Gastrocnemius medialis (tissue), 4 donors: ENCODE measurements at regions of chr5 and their contacts with region 1.

Region 1: DNA sequence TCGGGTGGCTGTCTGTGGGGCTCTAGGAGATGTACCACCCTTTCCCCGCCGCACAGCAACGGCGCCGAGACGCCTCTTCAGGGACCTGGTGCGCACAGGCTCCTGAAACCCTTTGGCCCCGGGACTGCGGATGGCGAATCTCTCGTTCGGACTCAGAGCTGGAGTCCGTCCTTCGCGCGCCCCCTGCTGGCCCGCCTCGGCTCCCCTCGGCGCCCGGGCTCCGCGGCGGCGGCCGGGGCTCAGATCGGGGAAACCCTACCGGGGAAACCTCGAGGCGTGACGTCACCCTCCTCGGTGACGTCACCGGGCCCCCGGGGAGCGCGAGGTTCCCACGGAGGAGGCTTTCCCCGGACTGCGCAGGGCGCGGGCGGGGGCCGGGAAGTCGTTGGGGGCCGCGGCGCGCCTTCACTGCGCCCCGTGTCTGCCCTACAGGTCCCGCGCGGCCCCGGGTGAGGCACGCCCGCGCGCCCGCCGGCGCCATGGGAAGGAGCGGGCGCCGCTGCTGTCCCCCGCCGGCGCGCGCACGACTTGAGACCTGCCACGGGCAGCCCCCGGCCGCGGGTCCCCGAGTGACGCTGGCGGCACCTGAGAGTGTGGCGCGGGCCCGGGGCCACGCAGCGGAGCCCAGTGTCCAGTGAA is 7.9 kb downstream of the PRR7 start:
- DNase-seq: peak; percentile 68 to 86
- ATAC-seq: peak; percentile 67 to 68
- H3K4me3 ChIP-seq: peak overlapping the region; percentile 55 to 93 (median 73)
- H3K27ac ChIP-seq: peak overlapping the region; percentile 67 to 77 (median 70)
- H3K4me1 ChIP-seq: peaks cover 9 to 25% of the 10 kb centered on the region in 2 donors
- H3K27me3 ChIP-seq: peaks cover 2 to 12% (median 9%) of the 10 kb centered on the region in 3 donors
- CTCF ChIP-seq: peak; percentile 87 to 98 (median 97)
- POLR2A ChIP-seq: peak; percentile 5 to 16

Region 2: DNA sequence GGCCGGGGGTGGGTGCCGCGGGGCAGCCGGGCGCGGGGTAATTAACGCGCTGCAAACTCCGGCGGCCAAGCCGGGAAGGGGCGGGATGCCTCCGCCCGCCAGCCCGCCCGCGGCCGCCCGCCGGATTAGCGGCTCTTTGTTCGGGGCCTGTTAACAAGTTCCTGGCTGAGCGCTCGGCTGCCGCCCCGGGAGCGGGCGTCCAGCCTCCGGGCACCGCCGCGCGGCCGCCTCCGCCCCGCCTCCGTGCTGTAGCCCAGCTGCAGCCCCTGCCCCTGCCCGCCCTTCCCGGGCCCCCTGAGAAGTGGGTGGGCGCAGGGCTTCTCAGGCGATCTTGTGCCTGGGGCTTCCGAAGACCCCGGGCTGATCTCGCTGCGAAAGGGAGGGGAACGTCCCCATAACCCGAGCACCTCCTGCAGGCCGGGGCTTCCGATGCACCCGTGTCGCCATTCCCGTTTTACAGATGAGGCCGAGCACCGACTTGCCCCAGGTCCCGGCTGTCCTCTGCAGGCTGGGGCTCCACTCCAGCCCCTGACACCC is 636.6 kb before region 1 on chr5:
- in situ Hi-C with region 1: no loop called
- intact Hi-C with region 1: no loop called
- DNase-seq: no peak
- ATAC-seq: no peak
- H3K4me3 ChIP-seq: peak overlapping the region in 3 of 4 donors; percentile 25 to 39 (median 36)
- H3K27ac ChIP-seq: no peak overlapping the region
- H3K4me1 ChIP-seq: no peaks in the 10 kb centered on the region
- H3K27me3 ChIP-seq: peaks cover 44 to 67% (median 46%) of the 10 kb centered on the region in 3 donors
- CTCF ChIP-seq: no peak
- POLR2A ChIP-seq: no peak

Region 3: GRCh38 chr5:177311723-177312648 is 142.5 kb before region 1 on chr5 and contains the start of gene MXD3:
- in situ Hi-C with region 1: no loop called
- intact Hi-C with region 1: loop called (anchors 5 kb)
- DNase-seq: peak; percentile 96 to 97
- ATAC-seq: peak; percentile 85 to 90
- H3K4me3 ChIP-seq: peak within 1 kb of the TSS; percentile 60 to 96 (median 78)
- H3K27ac ChIP-seq: peak within 1 kb of the TSS; percentile 58 to 83 (median 78)
- H3K4me1 ChIP-seq: peaks cover 27 to 28% of the 10 kb centered on the region in 2 donors
- H3K27me3 ChIP-seq: no peaks in the 10 kb centered on the region
- CTCF ChIP-seq: no peak
- POLR2A ChIP-seq: no peak
- total RNA-seq, gene MXD3: 0.90 to 7.8 (median 3.5) TPM

Region 4: GRCh38 chr5:177390363-177391300 is 63.9 kb before region 1 on chr5:
- in situ Hi-C with region 1: loop called in 1 of 4 experiments (anchors 10 kb)
- intact Hi-C with region 1: loop called (anchors 1 kb)
- DNase-seq: peak; percentile 51 to 73
- ATAC-seq: peak; percentile 84 to 95
- H3K4me3 ChIP-seq: no peak overlapping the region
- H3K27ac ChIP-seq: no peak overlapping the region
- H3K4me1 ChIP-seq: no peaks in the 10 kb centered on the region
- H3K27me3 ChIP-seq: no peaks in the 10 kb centered on the region
- CTCF ChIP-seq: peak; percentile 91 to 99 (median 95)
- POLR2A ChIP-seq: no peak

Region 5: DNA sequence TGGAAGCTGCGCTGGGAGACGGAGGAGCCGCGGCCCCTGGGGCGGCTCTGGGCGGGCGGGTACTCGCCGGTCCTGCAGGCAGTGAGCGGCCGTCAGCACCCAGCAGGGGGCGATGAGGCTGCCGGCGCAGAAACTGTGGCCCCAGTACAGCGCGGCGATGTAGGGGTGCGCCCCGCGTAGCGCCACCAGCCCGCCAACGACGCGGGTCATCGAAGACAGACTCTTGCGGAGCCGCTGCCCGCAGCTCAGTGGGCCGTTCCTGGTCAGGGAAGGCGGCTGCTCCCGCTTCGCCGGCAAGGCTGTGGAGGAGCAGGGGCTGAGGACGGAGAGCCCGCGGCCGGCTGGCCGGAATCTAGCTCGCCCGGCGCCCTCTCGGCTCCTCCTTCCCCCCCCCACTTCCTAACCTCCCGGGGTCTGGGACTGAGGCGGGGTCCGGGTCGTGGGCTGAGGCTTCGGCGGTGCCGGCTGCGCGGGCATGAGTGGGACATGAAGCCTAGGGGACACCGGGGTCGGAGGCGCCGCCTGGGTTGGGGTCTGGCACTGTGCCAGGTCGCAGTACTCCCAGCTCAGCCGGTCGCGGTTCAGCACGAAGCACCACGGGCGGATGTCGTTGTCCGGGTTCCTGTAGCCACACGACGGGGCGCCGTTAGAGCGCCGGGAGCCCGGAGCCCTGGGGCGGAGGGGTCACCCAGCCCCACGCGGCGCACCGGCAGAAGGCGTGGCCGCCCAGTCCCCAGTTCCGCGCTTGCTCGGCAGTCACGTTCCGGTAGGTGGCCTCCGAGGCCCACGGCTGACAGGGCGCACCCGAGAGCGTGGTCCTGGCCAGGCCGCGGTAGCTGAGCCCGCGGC is 50.5 kb before region 1 on chr5:
- in situ Hi-C with region 1: loop called in 2 of 4 experiments (anchors 10 kb)
- intact Hi-C with region 1: loop called (anchors 1 kb)
- DNase-seq: peak; percentile 77 to 79
- ATAC-seq: peak; percentile 89 to 91
- H3K4me3 ChIP-seq: peak overlapping the region; percentile 53 to 69 (median 64)
- H3K27ac ChIP-seq: no peak overlapping the region
- H3K4me1 ChIP-seq: peaks cover 27 to 28% of the 10 kb centered on the region in 2 donors
- H3K27me3 ChIP-seq: peaks cover 49 to 57% (median 55%) of the 10 kb centered on the region in 3 donors
- CTCF ChIP-seq: peak; percentile 56 to 85 (median 78)
- POLR2A ChIP-seq: no peak

Region 6: DNA sequence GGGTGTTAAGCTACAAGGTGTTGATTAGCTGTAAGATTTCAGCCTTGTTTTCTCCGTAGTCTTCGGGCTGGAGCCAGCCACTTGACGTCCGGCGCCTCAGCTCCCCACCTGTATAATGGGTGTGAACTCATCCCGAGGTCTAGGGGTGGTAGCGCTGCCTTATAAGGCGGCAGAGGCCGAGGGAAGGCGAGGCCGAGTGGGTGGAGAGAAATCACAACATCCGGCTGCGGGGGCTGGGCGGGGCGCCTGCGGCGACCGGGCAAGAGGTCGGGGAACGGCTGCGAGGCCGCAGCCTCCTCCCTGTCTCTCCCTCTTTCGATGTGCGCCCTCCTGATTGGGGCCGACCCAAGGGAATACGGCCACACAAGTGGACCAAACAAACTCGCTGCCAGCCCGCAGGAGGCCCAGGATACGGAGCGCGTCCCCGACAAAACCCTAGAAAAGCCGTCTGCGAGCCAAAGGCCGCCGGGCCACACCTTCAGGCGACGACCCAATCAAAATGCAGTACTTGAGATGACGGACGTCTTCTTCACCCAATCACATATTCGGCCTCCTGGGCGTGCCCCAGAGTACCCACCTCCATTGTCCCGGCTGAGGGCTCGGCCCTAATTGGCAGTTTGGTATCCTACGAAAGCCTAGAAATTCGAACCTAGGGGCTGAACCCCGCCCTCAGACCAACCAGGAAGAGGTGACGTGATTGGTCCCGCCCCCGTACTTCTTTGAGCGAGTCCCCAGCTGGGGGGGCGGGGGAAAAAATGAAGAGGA is 28.5 kb before region 1 on chr5:
- in situ Hi-C with region 1: no loop called
- intact Hi-C with region 1: loop called (anchors 1 kb)
- DNase-seq: peak; percentile 100
- ATAC-seq: peak; percentile 96 to 97
- H3K4me3 ChIP-seq: peak overlapping the region; percentile 59 to 64 (median 63)
- H3K27ac ChIP-seq: peak overlapping the region; percentile 87 to 93 (median 89)
- H3K4me1 ChIP-seq: peaks cover 24 to 26% of the 10 kb centered on the region in 2 donors
- H3K27me3 ChIP-seq: no peaks in the 10 kb centered on the region
- CTCF ChIP-seq: no peak
- POLR2A ChIP-seq: peak; percentile 71 to 78

Region 7: DNA sequence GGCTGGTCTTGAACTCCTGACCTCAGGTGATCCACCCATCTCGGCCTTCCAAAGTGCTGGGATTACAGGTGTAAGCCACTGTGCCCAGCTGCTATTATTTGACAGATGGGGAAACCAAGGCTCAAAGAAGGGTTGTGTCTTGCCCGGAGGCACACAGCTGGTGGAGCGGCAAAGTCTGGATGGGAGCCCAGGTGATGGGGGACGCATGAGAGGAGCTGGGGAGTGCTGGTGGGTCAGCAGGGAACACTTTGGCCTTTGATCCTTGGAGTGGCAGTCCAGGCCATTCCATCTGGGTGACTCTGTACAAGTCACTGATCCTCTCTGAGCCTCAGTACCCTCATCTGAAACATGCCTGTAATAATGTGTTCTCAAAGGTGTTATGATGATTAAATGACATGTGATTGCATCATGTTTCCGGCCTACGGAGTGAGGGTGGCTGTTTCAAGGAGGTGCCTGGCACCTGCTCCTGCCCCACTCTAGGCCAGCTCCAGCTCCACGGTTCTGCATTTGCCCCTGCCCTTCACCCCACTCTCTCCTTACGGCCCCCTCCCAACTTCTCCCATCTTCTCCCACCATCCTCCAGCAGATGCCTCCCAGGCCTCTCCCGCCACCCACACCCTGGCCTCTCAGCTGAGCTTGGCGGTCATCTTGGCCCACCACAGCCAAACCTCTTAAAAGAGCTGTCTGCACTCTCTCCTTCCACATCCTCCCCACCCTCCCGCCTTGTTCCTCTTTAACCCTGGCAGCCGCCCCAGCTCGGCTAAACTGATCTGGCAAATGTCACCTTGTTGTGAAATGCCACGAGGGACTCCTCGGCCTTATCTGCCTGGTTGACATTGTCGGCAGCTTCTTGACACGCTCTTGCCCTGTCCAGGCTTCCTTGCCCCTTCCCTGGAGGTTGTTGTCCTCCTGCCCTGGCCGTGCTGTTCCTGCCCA is 24.5 kb after region 1 on chr5:
- in situ Hi-C with region 1: no loop called
- intact Hi-C with region 1: loop called (anchors 2 kb)
- DNase-seq: peak; percentile 83 to 92
- ATAC-seq: peak; percentile 82 to 88
- H3K4me3 ChIP-seq: no peak overlapping the region
- H3K27ac ChIP-seq: peak overlapping the region; percentile 81 to 96 (median 87)
- H3K4me1 ChIP-seq: peaks cover 26 to 50% of the 10 kb centered on the region in 2 donors
- H3K27me3 ChIP-seq: no peaks in the 10 kb centered on the region
- CTCF ChIP-seq: no peak
- POLR2A ChIP-seq: no peak